ENCODE measurements at regions of chr9 and their contacts with region 1.

Region 1: GRCh38 chr9:111572950-111573604 is 26.4 kb downstream of the PTGR1 start:
- DNase-seq: no peak
- ATAC-seq: no peak
- H3K4me3 ChIP-seq: no peak overlapping the region
- H3K27ac ChIP-seq: no peak overlapping the region
- H3K4me1 ChIP-seq: no peaks in the 10 kb centered on the region
- H3K27me3 ChIP-seq: no peaks in the 10 kb centered on the region
- CTCF ChIP-seq: no peak

Region 2: GRCh38 chr9:111842313-111842712 is 269.2 kb after region 1 on chr9:
- CTCF ChIA-PET with region 1: no interaction called
- POLR2A ChIA-PET with region 1: interaction called, 11 read pairs
- in situ Hi-C with region 1: no loop called
- intact Hi-C with region 1: no loop called
- DNase-seq: no peak
- ATAC-seq: no peak
- H3K4me3 ChIP-seq: no peak overlapping the region
- H3K27ac ChIP-seq: no peak overlapping the region
- H3K4me1 ChIP-seq: peaks cover 3% of the 10 kb centered on the region; the same call in 1 of the 2 replicates
- H3K27me3 ChIP-seq: no peaks in the 10 kb centered on the region
- CTCF ChIP-seq: no peak